Activated CD4-positive, alpha-beta T cell treated with anti-CD3 and anti-CD28 coated beads for 36 hours (primary cell): ENCODE measurements at regions of chr20 and their contacts with region 1.

Region 1: DNA sequence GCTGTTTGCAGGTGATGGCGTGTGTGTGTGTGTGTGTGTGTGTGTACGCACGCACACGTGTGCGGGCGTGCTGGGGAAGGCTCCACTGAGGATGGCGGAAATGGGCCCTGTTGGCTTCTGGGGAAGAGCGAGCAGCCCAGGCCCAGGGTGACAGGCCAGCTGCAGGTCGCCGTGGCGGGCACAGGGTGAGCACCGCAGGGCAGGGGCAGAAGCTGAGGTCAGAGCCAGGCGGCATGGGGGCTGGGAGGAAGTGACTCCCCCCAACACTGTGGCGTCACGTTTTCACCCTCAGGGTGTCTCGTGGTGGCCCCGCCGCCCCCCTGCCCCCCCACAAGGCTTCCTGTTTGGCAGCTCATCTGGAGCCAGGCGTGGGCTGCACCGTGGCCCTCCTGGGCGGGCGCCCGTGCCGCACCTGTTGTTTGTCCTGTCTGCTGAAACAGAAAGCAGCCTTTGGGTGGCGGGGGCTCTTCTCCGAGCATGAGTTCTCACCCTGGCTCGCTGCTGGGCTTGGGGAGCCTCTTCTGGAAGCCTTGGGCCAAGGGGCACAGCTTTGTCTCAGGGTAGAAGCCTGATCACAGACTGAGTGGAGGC is 7.1 kb downstream of the RBM38 start:
- DNase-seq: peak; percentile 93
- ATAC-seq: peak; percentile 69
- H3K4me3 Mint-ChIP-seq: peak overlapping the region; percentile 74
- H3K27ac Mint-ChIP-seq: peak overlapping the region; percentile 99
- H3K4me1 Mint-ChIP-seq: peaks cover 92% of the 10 kb centered on the region
- H3K27me3 Mint-ChIP-seq: no peaks in the 10 kb centered on the region

Region 2: DNA sequence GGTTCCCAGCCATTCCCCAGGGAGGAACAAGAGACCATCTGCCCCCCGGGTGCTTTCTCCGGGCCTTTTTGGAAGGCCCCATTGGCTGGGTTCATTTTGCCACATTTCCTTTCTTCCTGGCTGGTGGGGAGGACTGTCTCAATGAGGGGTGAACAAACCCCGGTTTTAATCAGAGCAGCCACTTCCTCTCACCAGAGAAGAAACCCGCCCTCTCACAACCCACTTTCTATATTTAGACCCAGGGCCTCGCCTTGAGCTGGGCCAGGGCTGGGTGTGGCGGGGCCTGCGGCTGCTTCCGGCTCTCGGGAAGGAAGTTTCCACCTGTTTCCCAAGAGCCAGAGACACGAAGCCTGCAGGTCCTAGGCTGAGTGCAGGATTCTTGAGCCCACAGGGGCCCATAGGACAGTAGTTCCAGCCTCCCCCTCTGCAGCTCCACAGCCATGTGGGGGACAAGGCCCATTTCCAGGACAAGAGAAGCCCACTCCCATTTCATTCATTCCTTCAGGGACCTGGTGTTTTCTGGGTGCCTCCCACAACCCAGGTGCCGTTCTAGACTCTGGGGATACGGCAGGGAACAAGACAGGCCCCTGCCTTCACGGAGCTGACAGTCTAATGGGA is 34.7 kb after region 1 on chr20:
- CTCF ChIA-PET with region 1: interaction called, 4 read pairs
- POLR2A ChIA-PET with region 1: interaction called, 5 read pairs
- intact Hi-C with region 1: loop called (anchors 2 kb)
- DNase-seq: peak; percentile 80
- ATAC-seq: peak; percentile 91
- H3K4me3 Mint-ChIP-seq: no peak overlapping the region
- H3K27ac Mint-ChIP-seq: peak overlapping the region; percentile 83
- H3K4me1 Mint-ChIP-seq: peaks cover 56% of the 10 kb centered on the region
- H3K27me3 Mint-ChIP-seq: no peaks in the 10 kb centered on the region